GM12878 (cell line): ENCODE measurements at regions of chr1 and their contacts with region 1.

Region 1: GRCh38 chr1:200620273-200621131 is at the start of gene KIF14:
- DNase-seq: peak; percentile 67
- ATAC-seq: peak; percentile 92
- H3K4me3 ChIP-seq: peak within 1 kb of the TSS; percentile 88
- H3K27ac ChIP-seq: peak within 1 kb of the TSS; percentile 74
- H3K4me1 ChIP-seq: peaks cover 20% of the 10 kb centered on the region
- H3K27me3 ChIP-seq: no peaks in the 10 kb centered on the region
- CTCF ChIP-seq: no peak
- EP300 ChIP-seq: no peak
- POLR2A ChIP-seq: peak; percentile 82
- RAD21 ChIP-seq: no peak
- polyA plus RNA-seq, gene KIF14: 6.8 to 6.9 TPM

Region 2: GRCh38 chr1:200634261-200635122 is 14.0 kb after region 1 on chr1:
- CTCF ChIA-PET with region 1: interaction called, 25 read pairs
- POLR2A ChIA-PET with region 1: interaction called, 8 read pairs
- RAD21 ChIA-PET with region 1: interaction called, 12 read pairs
- SMC1A ChIA-PET with region 1: interaction called, 18 read pairs
- in situ Hi-C with region 1: no loop called
- intact Hi-C with region 1: no loop called
- DNase-seq: no peak
- ATAC-seq: peak; percentile 59
- H3K4me3 ChIP-seq: no peak overlapping the region
- H3K27ac ChIP-seq: 0 out of 2 replicates have a peak overlapping the region, but pooled peaks have one; percentile 15
- H3K4me1 ChIP-seq: peaks cover 9% of the 10 kb centered on the region
- H3K27me3 ChIP-seq: no peaks in the 10 kb centered on the region
- CTCF ChIP-seq: peak in 1 of 3 experiments; percentile 41; a peak in 2 of 6 replicates
- EP300 ChIP-seq: no peak
- POLR2A ChIP-seq: no peak
- RAD21 ChIP-seq: 0 out of 2 replicates have a peak, but pooled peaks have one; percentile 21

Region 3: DNA sequence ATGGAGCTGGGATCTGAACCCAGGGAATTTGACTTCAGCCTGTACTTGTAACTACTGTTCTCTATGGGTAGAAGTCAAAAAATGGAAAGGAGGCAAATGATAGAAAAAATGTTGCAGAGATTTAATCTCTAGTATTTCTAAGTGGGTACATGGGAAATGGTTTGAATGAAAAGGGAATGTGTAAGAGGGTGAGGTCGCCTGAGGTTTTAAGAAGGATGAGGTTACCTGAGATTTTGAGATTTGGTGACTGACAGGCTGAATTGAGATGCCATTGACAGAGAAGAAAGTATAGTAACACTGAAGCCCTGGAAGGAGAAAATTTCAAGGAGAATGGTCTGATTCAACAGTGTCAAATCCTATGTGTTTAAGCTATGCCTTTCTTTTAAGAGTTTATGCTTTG is 123.6 kb after region 1 on chr1:
- CTCF ChIA-PET with region 1: interaction called, 13 read pairs
- POLR2A ChIA-PET with region 1: no interaction called
- RAD21 ChIA-PET with region 1: interaction called, 21 read pairs
- SMC1A ChIA-PET with region 1: interaction called, 12 read pairs
- in situ Hi-C with region 1: no loop called
- intact Hi-C with region 1: loop called (anchors 1 kb)
- DNase-seq: no peak
- ATAC-seq: no peak
- H3K4me3 ChIP-seq: peak overlapping the region; percentile 22
- H3K27ac ChIP-seq: no peak overlapping the region
- H3K4me1 ChIP-seq: no peaks in the 10 kb centered on the region; the same call in 1 of the 2 replicates
- H3K27me3 ChIP-seq: no peaks in the 10 kb centered on the region
- CTCF ChIP-seq: no peak
- EP300 ChIP-seq: no peak
- POLR2A ChIP-seq: no peak
- RAD21 ChIP-seq: no peak

Region 4: DNA sequence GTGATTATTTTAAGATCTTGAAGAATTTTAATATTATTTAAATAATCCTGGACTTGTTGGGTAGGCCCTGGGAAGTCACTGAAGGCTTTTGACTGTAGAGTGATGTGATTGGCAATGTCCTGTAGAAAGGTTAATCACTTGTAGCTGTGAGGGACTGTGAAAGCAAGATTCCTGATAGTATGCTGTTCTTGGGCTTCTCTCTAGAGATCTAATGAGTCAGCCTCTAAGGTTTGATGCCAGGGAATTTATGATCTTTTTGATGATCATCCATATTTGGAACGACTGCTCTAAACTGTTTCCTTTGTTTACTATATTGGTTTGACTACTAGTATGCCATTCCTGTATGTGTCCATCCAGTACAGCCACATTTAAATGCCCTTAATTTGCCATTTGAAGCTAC is 174.7 kb after region 1 on chr1:
- CTCF ChIA-PET with region 1: interaction called, 280 read pairs
- POLR2A ChIA-PET with region 1: interaction called, 3 read pairs
- RAD21 ChIA-PET with region 1: interaction called, 179 read pairs
- SMC1A ChIA-PET with region 1: interaction called, 195 read pairs
- in situ Hi-C with region 1: loop called (anchors 5 kb)
- intact Hi-C with region 1: no loop called
- DNase-seq: no peak
- ATAC-seq: no peak
- H3K4me3 ChIP-seq: no peak overlapping the region
- H3K27ac ChIP-seq: no peak overlapping the region
- H3K4me1 ChIP-seq: no peaks in the 10 kb centered on the region; the same call in 1 of the 2 replicates
- H3K27me3 ChIP-seq: no peaks in the 10 kb centered on the region
- CTCF ChIP-seq: no peak
- EP300 ChIP-seq: no peak
- POLR2A ChIP-seq: no peak
- RAD21 ChIP-seq: no peak

Region 5: GRCh38 chr1:200866521-200866920 is 246.0 kb after region 1 on chr1:
- CTCF ChIA-PET with region 1: interaction called, 21 read pairs
- POLR2A ChIA-PET with region 1: interaction called, 7 read pairs
- RAD21 ChIA-PET with region 1: interaction called, 14 read pairs
- SMC1A ChIA-PET with region 1: interaction called, 12 read pairs
- in situ Hi-C with region 1: no loop called
- intact Hi-C with region 1: loop called (anchors 2 kb)
- DNase-seq: peak; percentile 98
- ATAC-seq: peak; percentile 74
- H3K4me3 ChIP-seq: no peak overlapping the region
- H3K27ac ChIP-seq: peak overlapping the region; percentile 71
- H3K4me1 ChIP-seq: peaks cover 71% of the 10 kb centered on the region
- H3K27me3 ChIP-seq: no peaks in the 10 kb centered on the region
- CTCF ChIP-seq: no peak
- EP300 ChIP-seq: peak; percentile 96 to 97
- POLR2A ChIP-seq: no peak
- RAD21 ChIP-seq: peak; percentile 22; the same call in 1 of the 2 replicates

Region 6: GRCh38 chr1:200971955-200972711 is 351.6 kb after region 1 on chr1:
- CTCF ChIA-PET with region 1: interaction called, 54 read pairs
- POLR2A ChIA-PET with region 1: no interaction called
- RAD21 ChIA-PET with region 1: interaction called, 53 read pairs
- SMC1A ChIA-PET with region 1: interaction called, 27 read pairs
- in situ Hi-C with region 1: loop called (anchors 5 kb)
- intact Hi-C with region 1: loop called (anchors 5 kb)
- DNase-seq: no peak
- ATAC-seq: no peak
- H3K4me3 ChIP-seq: no peak overlapping the region
- H3K27ac ChIP-seq: no peak overlapping the region
- H3K4me1 ChIP-seq: peaks cover 23% of the 10 kb centered on the region
- H3K27me3 ChIP-seq: no peaks in the 10 kb centered on the region
- CTCF ChIP-seq: peak; percentile 62 to 82 (median 75)
- EP300 ChIP-seq: no peak
- POLR2A ChIP-seq: no peak
- RAD21 ChIP-seq: peak; percentile 88